Prostate gland (tissue), 2 donors: ENCODE measurements at regions of chr2 and their contacts with region 1.

Region 1: GRCh38 chr2:55232084-55232862 is at the starts of genes CLHC1 and RPS27A:
- DNase-seq: peak; percentile 88
- H3K4me3 ChIP-seq: peak within 1 kb of the TSS; percentile 73 to 75
- H3K27ac ChIP-seq: peak within 1 kb of the TSS; percentile 92 to 94
- H3K4me1 ChIP-seq: peaks cover 12% of the 10 kb centered on the region
- H3K27me3 ChIP-seq: no peaks in the 10 kb centered on the region
- CTCF ChIP-seq: peak in 2 of 4 experiments; percentile 16 to 37
- POLR2A ChIP-seq: peak; percentile 82
- total RNA-seq, gene CLHC1: 5.4 to 15.7 TPM
- total RNA-seq, gene RPS27A: 665 to 1,633 TPM

Region 2: GRCh38 chr2:55268907-55269644 is 36.8 kb after region 1 on chr2 and contains the start of gene MTIF2:
- intact Hi-C with region 1: loop called (anchors 5 kb)
- DNase-seq: peak; percentile 94
- H3K4me3 ChIP-seq: peak within 1 kb of the TSS; percentile 47 to 49
- H3K27ac ChIP-seq: peak within 1 kb of the TSS; percentile 79 to 81
- H3K4me1 ChIP-seq: no peaks in the 10 kb centered on the region
- H3K27me3 ChIP-seq: no peaks in the 10 kb centered on the region
- CTCF ChIP-seq: peak in 3 of 4 experiments; percentile 7 to 48 (median 24)
- POLR2A ChIP-seq: peak; percentile 41
- total RNA-seq, gene MTIF2: 23.9 to 25.7 TPM